GM10248 (cell line): ENCODE measurements at regions of chr12 and their contacts with region 1.

Region 1: GRCh38 chr12:48865434-48866290 is at the start of gene RND1:
- DNase-seq: peak; percentile 93
- CTCF ChIP-seq: no peak

Region 2: DNA sequence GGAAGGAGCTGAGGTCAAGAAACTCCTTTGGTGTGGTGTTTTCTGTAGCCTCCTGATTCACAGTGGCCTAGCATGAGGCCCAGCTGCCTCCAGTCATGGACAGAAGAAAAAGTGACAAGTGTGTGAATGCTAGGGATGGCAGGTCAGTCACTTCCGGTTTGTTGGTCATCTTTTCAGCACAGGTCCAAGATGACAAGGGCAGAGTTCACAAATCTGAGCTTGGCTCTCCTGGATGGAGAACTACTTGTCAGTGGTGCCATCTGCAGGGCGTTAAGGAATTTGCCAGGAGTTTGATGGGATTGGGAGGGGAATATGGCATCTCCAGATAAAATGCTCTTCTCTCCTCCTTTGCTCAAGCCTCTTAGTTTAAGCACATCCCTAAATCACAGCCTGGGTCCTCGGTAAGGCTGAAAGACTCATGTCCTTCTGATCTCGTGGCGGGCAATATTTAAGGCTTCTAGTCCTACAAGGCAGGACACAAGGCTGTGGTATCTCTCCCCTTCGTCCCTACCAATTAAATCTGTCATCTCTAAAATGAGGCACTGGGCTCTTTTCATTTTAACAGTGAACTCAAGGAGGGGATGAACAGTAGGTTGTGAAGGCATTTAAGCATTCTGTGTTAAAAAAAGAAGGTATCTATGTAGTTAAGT is 255.5 kb after region 1 on chr12:
- CTCF ChIA-PET with region 1: no interaction called
- POLR2A ChIA-PET with region 1: interaction called, 14 read pairs
- DNase-seq: peak; percentile 23
- CTCF ChIP-seq: peak; percentile 32